WTC11 (cell line): ENCODE measurements at regions of chr2 and their contacts with region 1.

Region 1: GRCh38 chr2:94986392-94986963 is 39.0 kb upstream of the MAL start:
- DNase-seq: peak; percentile 75
- ATAC-seq: peak; percentile 87
- H3K4me3 Mint-ChIP-seq: no peak overlapping the region
- H3K27ac Mint-ChIP-seq: no peak overlapping the region
- H3K4me1 Mint-ChIP-seq: 0 out of 2 replicates have a peak, but pooled peaks cover 4% of the 10 kb centered on the region
- H3K27me3 Mint-ChIP-seq: no peaks in the 10 kb centered on the region
- CTCF ChIP-seq: peak; percentile 78

Region 2: GRCh38 chr2:94956797-94957391 is 29.6 kb before region 1 on chr2:
- CTCF ChIA-PET with region 1: interaction called, 15 read pairs
- POLR2A ChIA-PET with region 1: no interaction called
- DNase-seq: peak; percentile 54
- ATAC-seq: peak; percentile 74
- H3K4me3 Mint-ChIP-seq: no peak overlapping the region
- H3K27ac Mint-ChIP-seq: no peak overlapping the region
- H3K4me1 Mint-ChIP-seq: peaks cover 15% of the 10 kb centered on the region
- H3K27me3 Mint-ChIP-seq: peaks cover 4% of the 10 kb centered on the region; the same call in 1 of the 2 replicates
- CTCF ChIP-seq: peak; percentile 80

Region 3: GRCh38 chr2:95022309-95023221 is 36.1 kb after region 1 on chr2:
- CTCF ChIA-PET with region 1: interaction called, 31 read pairs
- POLR2A ChIA-PET with region 1: no interaction called
- DNase-seq: peak; percentile 87
- ATAC-seq: peak; percentile 63
- H3K4me3 Mint-ChIP-seq: no peak overlapping the region
- H3K27ac Mint-ChIP-seq: no peak overlapping the region
- H3K4me1 Mint-ChIP-seq: peaks cover 41% of the 10 kb centered on the region
- H3K27me3 Mint-ChIP-seq: peaks cover 56% of the 10 kb centered on the region
- CTCF ChIP-seq: peak; percentile 90

Region 4: GRCh38 chr2:95076784-95077529 is 90.5 kb after region 1 on chr2:
- CTCF ChIA-PET with region 1: interaction called, 13 read pairs
- POLR2A ChIA-PET with region 1: no interaction called
- DNase-seq: peak; percentile 92
- ATAC-seq: peak; percentile 87
- H3K4me3 Mint-ChIP-seq: peak overlapping the region; percentile 65
- H3K27ac Mint-ChIP-seq: no peak overlapping the region
- H3K4me1 Mint-ChIP-seq: peaks cover 24% of the 10 kb centered on the region
- H3K27me3 Mint-ChIP-seq: peaks cover 6% of the 10 kb centered on the region
- CTCF ChIP-seq: peak; percentile 78

Region 5: GRCh38 chr2:95231723-95232122 is 245.2 kb after region 1 on chr2:
- CTCF ChIA-PET with region 1: no interaction called
- POLR2A ChIA-PET with region 1: no interaction called
- DNase-seq: peak; percentile 94
- ATAC-seq: peak; percentile 91
- H3K4me3 Mint-ChIP-seq: no peak overlapping the region
- H3K27ac Mint-ChIP-seq: no peak overlapping the region
- H3K4me1 Mint-ChIP-seq: no peaks in the 10 kb centered on the region
- H3K27me3 Mint-ChIP-seq: no peaks in the 10 kb centered on the region
- CTCF ChIP-seq: peak; percentile 69